PC-9 (cell line): ENCODE measurements at regions of chr1 and their contacts with region 1.

Region 1: DNA sequence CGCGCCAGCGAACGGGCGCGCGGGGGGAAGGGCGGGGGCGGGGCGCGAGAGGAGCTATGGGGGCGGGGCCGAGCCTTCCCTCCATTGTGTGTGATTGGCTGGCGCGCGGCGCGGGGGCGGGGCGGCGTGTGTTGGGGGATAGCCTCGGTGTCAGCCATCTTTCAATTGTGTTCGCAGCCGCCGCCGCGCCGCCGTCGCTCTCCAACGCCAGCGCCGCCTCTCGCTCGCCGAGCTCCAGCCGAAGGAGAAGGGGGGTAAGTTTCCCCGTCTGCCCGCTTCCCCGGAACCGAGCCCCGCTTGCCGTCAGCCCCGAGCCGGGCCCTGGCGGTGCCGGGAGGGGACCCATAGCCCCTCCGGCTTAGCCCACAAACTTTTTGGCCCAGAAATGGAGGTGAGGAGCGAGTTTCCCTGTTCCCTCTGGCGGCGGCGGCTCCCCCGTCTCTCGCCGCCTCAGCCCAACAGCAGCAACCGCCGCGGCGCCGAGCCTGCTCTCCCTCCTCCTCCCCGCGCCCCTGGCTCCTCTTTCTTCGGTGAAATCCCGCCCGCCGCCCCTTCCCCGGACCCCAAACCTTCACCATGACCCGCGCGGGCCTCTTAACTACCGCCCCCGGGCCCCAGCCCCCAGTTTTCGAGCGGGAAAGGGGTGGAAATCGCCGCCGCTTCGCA is at the start of gene H3-3A:
- DNase-seq: peak; percentile 78 to 99
- H3K4me3 ChIP-seq: peak within 1 kb of the TSS; percentile 95
- H3K27ac ChIP-seq: peak within 1 kb of the TSS; percentile 94
- H3K4me1 ChIP-seq: peaks cover 23% of the 10 kb centered on the region
- H3K27me3 ChIP-seq: no peaks in the 10 kb centered on the region
- CTCF ChIP-seq: 0 out of 2 replicates have a peak, but pooled peaks have one; percentile 11
- total RNA-seq, gene H3-3A: 404 and 584 TPM in 2 replicates

Region 2: GRCh38 chr1:225467193-225468020 is 595.3 kb before region 1 on chr1:
- CTCF ChIA-PET with region 1: no interaction called
- POLR2A ChIA-PET with region 1: interaction called, 5 read pairs
- intact Hi-C with region 1: loop called (anchors 5 kb)
- DNase-seq: no peak
- H3K4me3 ChIP-seq: no peak overlapping the region
- H3K27ac ChIP-seq: no peak overlapping the region
- H3K4me1 ChIP-seq: peaks cover 42% of the 10 kb centered on the region
- H3K27me3 ChIP-seq: no peaks in the 10 kb centered on the region
- CTCF ChIP-seq: no peak

Region 3: GRCh38 chr1:225881969-225882693 is 180.6 kb before region 1 on chr1 and contains the start of gene TMEM63A:
- CTCF ChIA-PET with region 1: no interaction called
- POLR2A ChIA-PET with region 1: no interaction called
- intact Hi-C with region 1: loop called (anchors 5 kb)
- DNase-seq: peak; percentile 75 to 95
- H3K4me3 ChIP-seq: peak within 1 kb of the TSS; percentile 92
- H3K27ac ChIP-seq: peak within 1 kb of the TSS; percentile 75
- H3K4me1 ChIP-seq: peaks cover 57% of the 10 kb centered on the region
- H3K27me3 ChIP-seq: no peaks in the 10 kb centered on the region
- CTCF ChIP-seq: no peak; the same call in 1 of the 2 replicates
- total RNA-seq, gene TMEM63A: 115 and 126 TPM in 2 replicates

Region 4: DNA sequence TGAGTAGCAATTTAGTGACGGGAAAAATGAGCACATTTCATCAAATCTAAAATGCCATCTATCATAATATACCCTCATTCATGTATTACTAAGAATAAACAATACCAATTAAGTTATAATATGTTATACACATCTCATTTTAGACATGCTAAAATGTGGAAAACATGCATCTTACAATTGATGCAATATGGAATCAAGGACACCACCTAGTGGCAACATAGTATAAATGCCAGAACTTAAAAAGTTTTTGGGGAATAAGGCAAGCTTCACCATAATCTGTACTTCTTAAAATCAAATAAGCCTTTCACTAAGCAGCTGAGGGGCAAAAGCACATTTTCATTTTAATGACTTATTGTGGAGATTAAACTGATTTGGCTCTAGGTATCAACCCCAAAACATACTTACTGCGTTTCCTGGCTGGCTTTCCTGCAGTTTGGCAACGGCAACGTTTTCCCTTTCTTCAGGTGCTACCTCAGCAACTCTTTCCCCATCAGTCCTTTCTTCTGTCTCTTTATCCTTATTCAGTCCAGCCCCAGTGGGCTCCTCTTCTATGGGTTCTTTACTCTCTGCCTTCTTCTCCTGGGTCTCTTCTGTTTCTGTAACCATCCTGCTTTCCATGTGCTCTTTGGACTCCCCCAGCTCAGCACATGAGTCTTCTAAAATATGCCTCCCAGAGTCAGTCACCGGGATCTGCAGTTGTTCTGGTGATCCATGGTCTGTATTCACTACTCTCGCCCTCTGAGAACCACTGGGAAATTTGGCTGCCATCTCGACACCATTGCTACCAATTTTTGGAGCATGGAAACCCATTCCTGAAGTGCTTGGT is 75.0 kb before region 1 on chr1:
- CTCF ChIA-PET with region 1: interaction called, 16 read pairs
- POLR2A ChIA-PET with region 1: interaction called, 6 read pairs
- intact Hi-C with region 1: no loop called
- DNase-seq: peak in 1 of 2 experiments; percentile 41
- H3K4me3 ChIP-seq: no peak overlapping the region
- H3K27ac ChIP-seq: no peak overlapping the region
- H3K4me1 ChIP-seq: no peaks in the 10 kb centered on the region
- H3K27me3 ChIP-seq: no peaks in the 10 kb centered on the region
- CTCF ChIP-seq: peak; percentile 84

Region 5: GRCh38 chr1:226083302-226084101 is 20.8 kb after region 1 on chr1:
- CTCF ChIA-PET with region 1: interaction called, 11 read pairs
- POLR2A ChIA-PET with region 1: interaction called, 4 read pairs
- intact Hi-C with region 1: loop called (anchors 2 kb)
- DNase-seq: peak; percentile 68 to 96
- H3K4me3 ChIP-seq: peak overlapping the region; percentile 91
- H3K27ac ChIP-seq: peak overlapping the region; percentile 47
- H3K4me1 ChIP-seq: peaks cover 6% of the 10 kb centered on the region; the same call in 1 of the 2 replicates
- H3K27me3 ChIP-seq: no peaks in the 10 kb centered on the region
- CTCF ChIP-seq: no peak; the same call in 1 of the 2 replicates

Region 6: GRCh38 chr1:226201029-226201593 is 138.4 kb after region 1 on chr1:
- CTCF ChIA-PET with region 1: interaction called, 12 read pairs
- POLR2A ChIA-PET with region 1: interaction called, 5 read pairs
- intact Hi-C with region 1: loop called (anchors 1 kb)
- DNase-seq: no peak
- H3K4me3 ChIP-seq: no peak overlapping the region
- H3K27ac ChIP-seq: no peak overlapping the region
- H3K4me1 ChIP-seq: peaks cover 20% of the 10 kb centered on the region
- H3K27me3 ChIP-seq: no peaks in the 10 kb centered on the region
- CTCF ChIP-seq: no peak; the same call in 1 of the 2 replicates

Region 7: DNA sequence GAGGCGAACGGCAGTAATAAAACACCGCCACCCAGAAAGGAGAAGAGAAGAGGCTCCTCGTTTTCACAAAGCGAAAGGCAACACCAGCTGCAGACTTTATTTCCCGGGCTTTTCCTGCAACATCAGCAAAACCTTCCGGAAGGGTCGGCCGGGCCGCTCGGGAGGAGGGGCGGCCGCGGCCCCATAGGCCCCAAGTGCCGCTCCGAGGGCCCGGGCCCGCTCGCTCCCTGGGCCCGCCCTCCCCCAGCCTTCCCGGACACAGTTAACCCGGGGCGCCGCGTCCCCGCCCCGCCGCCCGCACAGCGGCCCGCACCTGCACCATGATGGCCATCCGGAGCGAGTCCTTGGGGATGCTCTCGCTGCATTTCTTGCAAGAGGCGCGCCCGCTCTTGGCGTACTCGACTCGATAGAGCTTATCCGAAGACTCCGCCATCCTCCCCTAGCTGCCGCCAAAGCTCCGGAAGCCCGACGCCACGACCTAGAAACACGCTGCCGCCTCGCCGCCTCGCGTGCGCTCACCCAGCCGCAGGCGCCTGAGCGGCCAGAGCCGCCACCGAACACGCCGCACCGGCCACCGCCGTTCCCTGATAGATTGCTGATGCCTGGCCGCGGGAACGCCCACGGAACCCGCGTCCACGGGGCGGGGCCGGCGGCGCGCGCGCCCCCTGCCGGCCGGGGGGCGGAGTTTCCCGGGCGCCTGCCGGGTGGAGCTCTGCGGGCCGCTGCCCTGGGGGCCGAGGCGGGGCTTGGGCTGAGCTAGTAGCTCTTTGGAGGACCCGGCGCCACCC is 345.0 kb after region 1 on chr1 and contains the start of gene PARP1:
- CTCF ChIA-PET with region 1: interaction called, 4 read pairs
- POLR2A ChIA-PET with region 1: interaction called, 5 read pairs
- intact Hi-C with region 1: loop called (anchors 5 kb)
- DNase-seq: peak; percentile 74 to 96
- H3K4me3 ChIP-seq: peak within 1 kb of the TSS; percentile 60
- H3K27ac ChIP-seq: no peak within 1 kb of the TSS
- H3K4me1 ChIP-seq: peaks cover 33% of the 10 kb centered on the region
- H3K27me3 ChIP-seq: no peaks in the 10 kb centered on the region
- CTCF ChIP-seq: peak; percentile 43
- total RNA-seq, gene PARP1: 123 and 157 TPM in 2 replicates

Region 8: DNA sequence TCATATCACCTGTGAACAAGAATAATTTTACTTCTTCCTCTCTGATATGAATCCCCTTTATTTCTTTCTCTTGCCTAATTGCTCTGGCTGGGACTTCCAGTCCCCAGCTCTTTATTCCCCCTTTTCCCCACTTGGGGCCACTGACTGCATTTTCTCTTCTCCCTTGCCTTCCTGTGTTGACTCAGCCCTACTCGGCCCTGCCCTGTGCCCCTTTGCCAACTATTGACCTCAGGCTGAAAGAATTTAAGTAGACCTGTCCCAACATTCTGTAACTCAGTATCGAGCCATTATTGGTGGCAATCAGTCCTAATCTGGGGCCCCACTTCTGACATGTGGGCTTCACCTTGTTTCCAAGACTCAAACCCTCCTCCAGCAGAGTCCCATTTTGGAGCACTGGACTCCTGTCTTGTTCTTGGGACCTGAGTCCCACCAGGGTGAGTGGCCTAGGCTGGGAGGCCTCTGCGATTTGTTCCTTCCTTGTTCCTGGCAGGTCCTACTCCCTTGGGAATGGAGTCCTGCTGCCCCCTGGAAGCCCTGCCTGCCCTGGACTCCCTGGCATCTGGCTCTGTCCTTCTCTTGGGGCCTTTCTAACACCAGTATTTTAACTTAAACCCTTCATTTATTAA is 425.3 kb after region 1 on chr1:
- CTCF ChIA-PET with region 1: no interaction called
- POLR2A ChIA-PET with region 1: no interaction called
- intact Hi-C with region 1: no loop called
- DNase-seq: peak in 1 of 2 experiments; percentile 55
- H3K4me3 ChIP-seq: no peak overlapping the region
- H3K27ac ChIP-seq: no peak overlapping the region
- H3K4me1 ChIP-seq: peaks cover 16% of the 10 kb centered on the region
- H3K27me3 ChIP-seq: peaks cover 37% of the 10 kb centered on the region
- CTCF ChIP-seq: no peak